Right cardiac atrium (tissue), 5 donors: ENCODE measurements at regions of chr3 and their contacts with region 1.

Region 1: GRCh38 chr3:57646723-57647122 is 46.2 kb downstream of the DENND6A start:
- DNase-seq: peak in 1 of 3 donors; percentile 59
- ATAC-seq: peak; percentile 91 to 95
- H3K4me3 ChIP-seq: no peak overlapping the region
- H3K27ac ChIP-seq: no peak overlapping the region
- H3K4me1 ChIP-seq: no peaks in the 10 kb centered on the region
- H3K27me3 ChIP-seq: no peaks in the 10 kb centered on the region

Region 2: GRCh38 chr3:57661404-57661803 is 14.7 kb after region 1 on chr3:
- intact Hi-C with region 1: no loop called
- DNase-seq: no peak
- ATAC-seq: no peak
- H3K4me3 ChIP-seq: no peak overlapping the region
- H3K27ac ChIP-seq: no peak overlapping the region
- H3K4me1 ChIP-seq: no peaks in the 10 kb centered on the region
- H3K27me3 ChIP-seq: no peaks in the 10 kb centered on the region

Region 3: DNA sequence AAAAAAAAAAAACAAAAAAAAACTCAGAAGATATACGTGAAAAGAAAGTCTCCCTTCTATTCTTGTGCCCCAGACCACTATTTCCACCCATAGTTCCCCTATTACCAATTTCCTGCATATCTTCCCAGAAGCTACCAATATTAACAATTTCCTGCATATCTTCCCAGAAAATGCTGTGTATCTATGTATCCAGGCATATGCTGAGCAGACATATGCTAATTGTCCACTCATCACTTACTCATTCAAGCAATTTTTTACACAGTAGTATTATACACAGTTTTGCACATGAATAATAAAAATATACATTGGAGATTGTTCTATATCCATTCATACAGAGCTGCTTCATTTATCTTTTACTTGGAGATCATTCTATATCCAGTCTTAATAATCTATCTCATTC is 96.8 kb after region 1 on chr3:
- intact Hi-C with region 1: no loop called
- DNase-seq: no peak
- ATAC-seq: no peak
- H3K4me3 ChIP-seq: no peak overlapping the region
- H3K27ac ChIP-seq: no peak overlapping the region
- H3K4me1 ChIP-seq: no peaks in the 10 kb centered on the region
- H3K27me3 ChIP-seq: no peaks in the 10 kb centered on the region

Region 4: DNA sequence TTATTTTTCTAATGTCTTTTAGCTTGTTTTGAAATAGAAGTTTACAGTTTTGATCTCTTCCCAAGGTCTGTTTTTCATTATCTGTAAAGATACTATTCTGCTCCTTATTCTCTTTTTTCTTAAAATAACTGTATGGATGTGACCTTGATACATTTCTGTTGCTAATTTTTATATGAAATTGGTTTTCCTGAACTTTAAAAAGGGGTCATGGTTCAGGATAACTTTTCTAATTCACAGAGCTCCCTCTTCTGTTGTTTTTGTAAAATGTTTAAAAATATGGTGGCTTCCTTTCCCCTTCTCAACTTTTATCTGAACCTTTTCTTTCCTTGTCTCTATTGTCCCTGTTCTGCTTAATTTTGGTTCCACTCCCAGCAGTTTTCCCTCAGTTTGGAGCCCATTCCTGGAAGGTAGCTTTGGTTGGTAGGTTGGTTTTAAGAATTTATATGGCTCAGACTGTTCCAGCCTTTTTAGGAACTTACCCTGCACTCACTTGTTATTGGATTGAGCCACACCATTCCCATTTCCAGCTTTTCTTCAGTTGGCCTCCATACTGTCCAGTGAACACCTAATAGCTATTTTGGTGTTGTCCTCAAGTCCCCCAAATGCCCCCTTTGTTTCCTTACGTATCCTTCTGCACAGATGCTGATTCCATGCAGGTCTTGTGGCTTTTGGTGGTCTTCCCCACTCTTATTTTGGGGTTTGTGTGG is 179.7 kb after region 1 on chr3:
- intact Hi-C with region 1: loop called in 1 of 4 experiments (anchors 10 kb)
- DNase-seq: no peak
- ATAC-seq: no peak
- H3K4me3 ChIP-seq: no peak overlapping the region
- H3K27ac ChIP-seq: no peak overlapping the region
- H3K4me1 ChIP-seq: peaks cover 2% of the 10 kb centered on the region
- H3K27me3 ChIP-seq: no peaks in the 10 kb centered on the region